Heart left ventricle (tissue), 16 donors: ENCODE measurements at regions of chr5 and their contacts with region 1.

Region 1: GRCh38 chr5:96752341-96753016 is 55.3 kb downstream of the ERAP1 start:
- DNase-seq: peak in 1 of 5 donors; percentile 38
- ATAC-seq: no peak
- H3K4me3 ChIP-seq: no peak overlapping the region
- H3K27ac ChIP-seq: peak overlapping the region in 10 of 12 donors; percentile 4 to 62 (median 36)
- H3K4me1 ChIP-seq: peaks cover 0 to 28% (median 11%) of the 10 kb centered on the region in 12 donors
- H3K27me3 ChIP-seq: no peaks in the 10 kb centered on the region
- CTCF ChIP-seq: peak; percentile 65 to 84 (median 74)
- POLR2A ChIP-seq: no peak

Region 2: DNA sequence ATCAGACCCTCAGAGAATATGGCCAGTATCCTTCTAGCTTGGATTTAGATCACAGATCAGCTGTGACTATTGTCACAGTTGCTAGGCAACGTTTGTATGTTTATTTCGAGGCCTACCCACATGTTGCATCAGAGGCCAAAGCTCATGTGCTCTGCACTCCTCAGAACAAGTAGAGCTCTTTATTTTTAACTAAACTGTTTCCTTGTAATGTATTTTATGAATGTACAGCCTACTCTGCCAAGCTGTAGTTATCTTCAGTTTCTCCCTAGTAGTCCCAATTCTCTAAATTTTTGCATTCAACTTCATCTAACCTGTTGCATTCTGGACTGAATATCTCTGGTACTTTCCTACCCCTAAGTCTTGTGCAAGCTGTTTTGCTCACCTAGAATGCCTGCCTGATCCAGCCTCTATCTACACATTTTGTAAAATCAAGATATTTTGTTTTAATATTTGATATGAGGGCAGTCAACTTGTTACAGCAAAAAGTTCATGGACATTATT is 37.5 kb before region 1 on chr5:
- intact Hi-C with region 1: no loop called
- DNase-seq: peak in 4 of 5 donors; percentile 60 to 74 (median 68)
- ATAC-seq: peak; percentile 68 to 90 (median 84)
- H3K4me3 ChIP-seq: no peak overlapping the region
- H3K27ac ChIP-seq: peak overlapping the region; percentile 17 to 98 (median 72)
- H3K4me1 ChIP-seq: peaks cover 8 to 99% (median 71%) of the 10 kb centered on the region in 12 donors
- H3K27me3 ChIP-seq: no peaks in the 10 kb centered on the region
- CTCF ChIP-seq: no peak
- POLR2A ChIP-seq: peak in 1 of 2 donors; percentile 18

Region 3: DNA sequence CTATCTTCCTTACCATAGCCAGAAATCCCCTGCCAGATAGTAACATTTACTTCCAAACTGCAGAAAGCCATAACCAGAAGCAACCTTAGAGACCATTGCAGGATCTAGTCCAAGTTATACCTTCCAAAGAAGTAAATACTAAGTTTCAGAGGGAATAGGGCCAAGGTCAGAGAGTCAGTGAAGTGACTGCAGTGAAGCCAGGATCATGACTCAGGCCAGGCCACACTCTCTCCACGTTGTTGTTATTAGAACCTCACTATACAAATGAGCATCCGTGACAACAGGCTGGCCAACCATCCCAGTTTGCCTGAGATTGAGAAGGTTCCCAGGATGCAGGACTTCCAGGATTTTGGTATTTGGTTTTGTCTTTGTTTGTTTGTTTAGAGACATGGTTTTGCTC is 44.0 kb after region 1 on chr5:
- intact Hi-C with region 1: no loop called
- DNase-seq: no peak
- ATAC-seq: no peak
- H3K4me3 ChIP-seq: no peak overlapping the region
- H3K27ac ChIP-seq: no peak overlapping the region
- H3K4me1 ChIP-seq: peaks cover 0 to 2% (median 0%) of the 10 kb centered on the region in 12 donors
- H3K27me3 ChIP-seq: no peaks in the 10 kb centered on the region
- CTCF ChIP-seq: no peak
- POLR2A ChIP-seq: no peak

Region 4: GRCh38 chr5:96876292-96876850 is 123.9 kb after region 1 on chr5 and contains the start of gene ERAP2:
- intact Hi-C with region 1: loop called in 1 of 10 experiments (anchors 10 kb)
- DNase-seq: no peak
- ATAC-seq: peak; percentile 52 to 86 (median 70)
- H3K4me3 ChIP-seq: peak within 1 kb of the TSS; percentile 36 to 93 (median 67)
- H3K27ac ChIP-seq: peak within 1 kb of the TSS; percentile 29 to 91 (median 76)
- H3K4me1 ChIP-seq: peaks cover 0 to 49% (median 7%) of the 10 kb centered on the region in 12 donors
- H3K27me3 ChIP-seq: no peaks in the 10 kb centered on the region
- CTCF ChIP-seq: no peak
- POLR2A ChIP-seq: no peak
- total RNA-seq, gene ERAP2: 2.7 to 30.5 (median 7.0) TPM

Region 5: DNA sequence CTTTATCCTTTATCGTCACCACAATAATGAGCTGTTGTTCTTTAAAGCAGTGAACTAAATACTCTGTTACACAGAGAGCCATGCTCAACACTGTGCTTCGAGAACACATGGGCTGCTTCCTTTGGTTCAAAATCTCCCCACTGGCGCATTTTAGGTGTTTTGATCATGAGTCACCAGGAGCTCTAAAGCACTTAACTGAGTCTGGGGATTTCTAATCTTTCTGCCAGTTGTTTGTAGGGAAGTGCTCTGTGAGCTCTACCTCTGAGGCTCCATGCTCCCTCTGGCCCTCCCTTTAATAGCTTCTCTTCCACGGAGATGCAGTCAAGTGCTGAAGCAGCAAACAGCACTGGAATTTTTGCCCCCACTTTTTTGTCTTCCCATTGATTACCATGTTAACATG is 140.9 kb after region 1 on chr5:
- intact Hi-C with region 1: no loop called
- DNase-seq: no peak
- ATAC-seq: peak in 1 of 4 donors; percentile 20
- H3K4me3 ChIP-seq: no peak overlapping the region
- H3K27ac ChIP-seq: no peak overlapping the region
- H3K4me1 ChIP-seq: peaks cover 0 to 19% (median 0%) of the 10 kb centered on the region in 12 donors
- H3K27me3 ChIP-seq: no peaks in the 10 kb centered on the region
- CTCF ChIP-seq: no peak
- POLR2A ChIP-seq: no peak

Region 6: DNA sequence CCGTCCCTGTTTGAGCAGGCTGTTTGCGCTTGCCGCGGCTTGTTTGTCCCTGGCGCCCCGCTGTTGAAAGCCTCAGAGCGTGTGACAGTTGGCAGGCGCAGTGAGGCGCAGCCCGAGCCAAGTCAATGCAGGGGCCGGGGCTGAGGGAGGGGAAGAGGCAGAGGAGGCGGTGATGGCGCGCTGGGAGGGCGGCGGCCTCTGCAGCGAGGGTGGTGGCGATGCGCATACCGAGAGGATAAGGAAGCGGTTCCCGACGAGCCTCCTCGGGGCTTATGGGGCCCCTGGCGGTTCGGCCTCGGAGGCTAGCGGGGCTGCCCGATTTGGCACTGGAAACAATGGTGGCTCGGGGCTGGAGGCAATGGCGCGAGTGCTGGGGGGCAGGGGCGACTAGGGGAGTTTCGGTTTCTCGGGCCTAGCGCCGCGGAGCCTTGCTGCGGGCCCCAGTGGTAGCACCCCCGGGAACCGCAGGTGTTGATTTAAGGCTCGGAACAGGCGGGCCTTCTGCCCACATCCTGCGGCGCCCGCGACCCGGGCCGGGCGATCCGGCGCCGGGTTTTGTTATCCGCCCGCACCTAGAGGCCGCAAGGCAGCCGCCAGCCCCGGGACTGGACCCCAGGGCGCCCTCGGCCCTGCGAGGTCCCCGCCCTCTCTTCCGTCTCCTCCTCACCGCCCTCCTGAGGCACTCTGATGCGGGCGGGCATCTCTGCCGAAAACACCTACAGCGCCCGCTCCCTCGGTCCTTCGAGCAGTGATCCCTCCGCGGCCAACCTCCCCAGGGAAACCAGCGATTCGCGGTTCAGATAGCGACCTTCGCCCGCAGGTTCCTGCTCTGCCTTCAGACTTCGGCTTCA is 182.5 kb after region 1 on chr5:
- intact Hi-C with region 1: loop called in 1 of 10 experiments (anchors 10 kb)
- DNase-seq: peak; percentile 90 to 96 (median 94)
- ATAC-seq: peak; percentile 83 to 89 (median 88)
- H3K4me3 ChIP-seq: peak overlapping the region; percentile 60 to 92 (median 84)
- H3K27ac ChIP-seq: peak overlapping the region; percentile 89 to 99 (median 97)
- H3K4me1 ChIP-seq: peaks cover 0 to 64% (median 40%) of the 10 kb centered on the region in 12 donors
- H3K27me3 ChIP-seq: no peaks in the 10 kb centered on the region
- CTCF ChIP-seq: peak in 2 of 12 donors; percentile 5 to 7
- POLR2A ChIP-seq: peak in 1 of 2 donors; percentile 44

Region 7: GRCh38 chr5:96997265-96997859 is 244.9 kb after region 1 on chr5:
- intact Hi-C with region 1: loop called in 2 of 10 experiments (anchors 10 kb)
- DNase-seq: no peak
- ATAC-seq: peak in 1 of 4 donors; percentile 61
- H3K4me3 ChIP-seq: no peak overlapping the region
- H3K27ac ChIP-seq: no peak overlapping the region
- H3K4me1 ChIP-seq: no peaks in the 10 kb centered on the region
- H3K27me3 ChIP-seq: no peaks in the 10 kb centered on the region
- CTCF ChIP-seq: peak in 11 of 12 donors; percentile 27 to 66 (median 49)
- POLR2A ChIP-seq: no peak

Region 8: GRCh38 chr5:97149709-97150108 is 397.2 kb after region 1 on chr5:
- intact Hi-C with region 1: loop called in 1 of 10 experiments (anchors 10 kb)
- DNase-seq: no peak
- ATAC-seq: no peak
- H3K4me3 ChIP-seq: no peak overlapping the region
- H3K27ac ChIP-seq: no peak overlapping the region
- H3K4me1 ChIP-seq: no peaks in the 10 kb centered on the region
- H3K27me3 ChIP-seq: no peaks in the 10 kb centered on the region
- CTCF ChIP-seq: no peak
- POLR2A ChIP-seq: no peak